ENCODE measurements at regions of chr17 and their contacts with region 1.

Region 1: GRCh38 chr17:27601069-27601975 is 29.7 kb upstream of the LGALS9 start:
- DNase-seq: peak in 1 of 2 experiments; percentile 65
- H3K4me3 ChIP-seq: no peak overlapping the region
- H3K27ac ChIP-seq: no peak overlapping the region
- H3K4me1 ChIP-seq: peaks cover 11% of the 10 kb centered on the region
- H3K27me3 ChIP-seq: no peaks in the 10 kb centered on the region
- CTCF ChIP-seq: peak; percentile 96

Region 2: GRCh38 chr17:27236717-27237315 is 364.5 kb before region 1 on chr17:
- CTCF ChIA-PET with region 1: interaction called, 9 read pairs
- POLR2A ChIA-PET with region 1: interaction called, 10 read pairs
- intact Hi-C with region 1: loop called (anchors 1 kb)
- DNase-seq: peak; percentile 61 to 68
- H3K4me3 ChIP-seq: no peak overlapping the region
- H3K27ac ChIP-seq: no peak overlapping the region
- H3K4me1 ChIP-seq: peaks cover 34% of the 10 kb centered on the region
- H3K27me3 ChIP-seq: no peaks in the 10 kb centered on the region
- CTCF ChIP-seq: peak; percentile 93

Region 3: GRCh38 chr17:27315322-27315721 is 286.0 kb before region 1 on chr17:
- CTCF ChIA-PET with region 1: interaction called, 10 read pairs
- POLR2A ChIA-PET with region 1: no interaction called
- intact Hi-C with region 1: no loop called
- DNase-seq: no peak
- H3K4me3 ChIP-seq: no peak overlapping the region
- H3K27ac ChIP-seq: no peak overlapping the region
- H3K4me1 ChIP-seq: no peaks in the 10 kb centered on the region
- H3K27me3 ChIP-seq: no peaks in the 10 kb centered on the region
- CTCF ChIP-seq: no peak

Region 4: GRCh38 chr17:27353461-27354050 is 247.8 kb before region 1 on chr17:
- CTCF ChIA-PET with region 1: interaction called, 11 read pairs
- POLR2A ChIA-PET with region 1: no interaction called
- intact Hi-C with region 1: loop called (anchors 1 kb)
- DNase-seq: peak; percentile 76 to 92
- H3K4me3 ChIP-seq: peak overlapping the region; percentile 62
- H3K27ac ChIP-seq: peak overlapping the region; percentile 74
- H3K4me1 ChIP-seq: peaks cover 11% of the 10 kb centered on the region; the same call in 1 of the 2 replicates
- H3K27me3 ChIP-seq: no peaks in the 10 kb centered on the region
- CTCF ChIP-seq: peak; percentile 70

Region 5: DNA sequence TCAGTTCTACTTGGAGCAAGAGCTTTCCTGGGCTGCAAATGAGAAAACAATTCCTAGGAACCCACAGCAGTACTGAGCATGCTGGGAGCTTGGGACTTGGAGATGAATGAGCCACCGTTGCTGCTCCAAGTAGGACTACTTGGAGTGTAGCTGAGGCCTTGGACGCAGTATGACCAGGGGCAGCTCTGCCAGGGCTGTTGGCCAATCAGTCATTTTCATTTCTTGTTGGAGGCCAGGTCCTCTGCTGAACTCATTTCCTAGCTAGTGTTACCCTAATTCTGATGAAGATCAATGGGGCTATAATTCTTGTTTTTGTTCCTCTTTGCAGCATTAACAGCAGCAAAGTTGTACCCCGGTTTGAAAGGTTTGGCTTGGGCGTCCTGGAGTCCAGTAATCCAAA is 21.7 kb after region 1 on chr17:
- CTCF ChIA-PET with region 1: no interaction called
- POLR2A ChIA-PET with region 1: no interaction called
- intact Hi-C with region 1: no loop called
- DNase-seq: no peak
- H3K4me3 ChIP-seq: no peak overlapping the region
- H3K27ac ChIP-seq: no peak overlapping the region
- H3K4me1 ChIP-seq: no peaks in the 10 kb centered on the region
- H3K27me3 ChIP-seq: no peaks in the 10 kb centered on the region
- CTCF ChIP-seq: no peak

Region 6: DNA sequence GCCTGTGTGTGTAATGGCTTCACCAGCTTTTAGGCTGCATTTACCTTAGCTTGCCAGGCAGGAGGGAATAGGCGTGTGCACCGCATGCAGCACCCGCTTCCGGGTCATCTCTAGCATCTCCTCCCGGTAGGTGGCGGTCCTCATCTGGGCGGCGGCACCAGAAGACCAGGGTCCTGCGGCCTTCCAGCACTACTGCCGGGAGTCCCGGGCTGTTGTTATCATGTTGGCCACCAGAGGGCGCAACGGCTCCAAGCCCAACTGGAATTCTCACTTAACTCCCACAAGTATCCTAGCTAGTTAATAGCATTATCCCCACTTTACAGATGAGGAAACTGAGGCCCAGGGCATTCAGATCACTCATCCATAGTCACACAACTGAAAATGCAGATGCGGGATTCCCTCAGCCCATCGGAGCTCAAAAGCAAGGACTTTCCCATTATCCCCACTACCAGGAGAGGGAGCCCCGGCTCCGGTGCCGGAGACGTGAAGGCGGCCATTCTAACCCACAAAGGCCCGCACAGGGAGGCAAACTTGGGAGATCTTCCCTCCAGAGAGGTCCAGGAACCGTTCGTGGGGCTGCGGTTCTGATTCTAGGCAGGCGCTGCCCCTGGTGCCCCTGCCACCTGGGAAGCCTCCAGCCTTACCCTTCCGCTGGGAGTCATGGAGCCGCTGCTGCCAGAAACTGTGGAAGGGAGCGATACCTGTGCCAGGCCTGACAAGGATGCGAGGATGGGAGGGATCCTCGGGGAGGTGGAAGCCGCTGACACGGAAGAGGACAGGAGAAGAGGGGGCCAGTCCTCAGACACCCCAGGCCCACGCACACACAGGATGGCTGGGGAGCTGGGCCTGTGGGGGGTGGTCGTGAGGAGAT is 53.6 kb after region 1 on chr17:
- CTCF ChIA-PET with region 1: no interaction called
- POLR2A ChIA-PET with region 1: no interaction called
- intact Hi-C with region 1: loop called (anchors 1 kb)
- DNase-seq: peak; percentile 55 to 71
- H3K4me3 ChIP-seq: no peak overlapping the region
- H3K27ac ChIP-seq: no peak overlapping the region
- H3K4me1 ChIP-seq: no peaks in the 10 kb centered on the region
- H3K27me3 ChIP-seq: peaks cover under 1% of the 10 kb centered on the region; the same call in 1 of the 2 replicates
- CTCF ChIP-seq: peak; percentile 96

Region 7: GRCh38 chr17:27733773-27734172 is 132.5 kb after region 1 on chr17:
- CTCF ChIA-PET with region 1: no interaction called
- POLR2A ChIA-PET with region 1: no interaction called
- intact Hi-C with region 1: no loop called
- DNase-seq: no peak
- H3K4me3 ChIP-seq: no peak overlapping the region
- H3K27ac ChIP-seq: no peak overlapping the region
- H3K4me1 ChIP-seq: no peaks in the 10 kb centered on the region
- H3K27me3 ChIP-seq: 0 out of 2 replicates have a peak, but pooled peaks cover 11% of the 10 kb centered on the region
- CTCF ChIP-seq: no peak

Measured in PC-9 (cell line).